GM12878 (cell line): ENCODE measurements at regions of chr6 and their contacts with region 1.

Region 1: GRCh38 chr6:139940741-139941729 is 566.6 kb upstream of the CITED2 start:
- DNase-seq: peak; percentile 17
- ATAC-seq: peak; percentile 95
- H3K4me3 ChIP-seq: no peak overlapping the region
- H3K27ac ChIP-seq: no peak overlapping the region
- H3K4me1 ChIP-seq: peaks cover 6% of the 10 kb centered on the region; the same call in 1 of the 2 replicates
- H3K27me3 ChIP-seq: no peaks in the 10 kb centered on the region
- CTCF ChIP-seq: no peak
- EP300 ChIP-seq: no peak
- POLR2A ChIP-seq: no peak
- RAD21 ChIP-seq: no peak

Region 2: DNA sequence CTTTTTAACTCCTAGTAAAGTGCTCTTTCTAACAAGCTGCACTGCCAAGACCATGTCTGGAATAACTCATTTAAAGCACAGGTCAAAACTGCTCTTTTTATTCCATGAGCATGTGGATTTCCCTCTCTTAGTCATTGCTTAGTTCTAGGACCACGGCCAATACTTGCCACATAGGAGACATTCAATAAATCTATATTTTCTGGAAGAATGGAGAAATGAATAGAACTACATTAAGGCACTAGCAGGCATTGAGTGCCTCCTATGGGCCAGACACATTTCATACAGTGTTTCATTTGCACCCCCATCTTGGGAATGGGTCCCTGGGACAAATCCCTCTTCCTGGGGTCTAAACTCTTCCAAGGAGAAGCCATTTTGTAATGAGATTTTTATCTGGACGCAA is 13.8 kb before region 1 on chr6:
- CTCF ChIA-PET with region 1: interaction called, 10 read pairs
- POLR2A ChIA-PET with region 1: interaction called, 3 read pairs
- RAD21 ChIA-PET with region 1: interaction called, 3 read pairs
- SMC1A ChIA-PET with region 1: interaction called, 17 read pairs
- in situ Hi-C with region 1: no loop called
- intact Hi-C with region 1: no loop called
- DNase-seq: no peak
- ATAC-seq: 0 out of 3 replicates have a peak, but pooled peaks have one; percentile 27
- H3K4me3 ChIP-seq: no peak overlapping the region
- H3K27ac ChIP-seq: no peak overlapping the region
- H3K4me1 ChIP-seq: no peaks in the 10 kb centered on the region
- H3K27me3 ChIP-seq: no peaks in the 10 kb centered on the region
- CTCF ChIP-seq: peak; percentile 28 to 48 (median 31); a peak in 4 of 6 replicates
- EP300 ChIP-seq: no peak
- POLR2A ChIP-seq: no peak
- RAD21 ChIP-seq: peak; percentile 62